Endothelial cell of umbilical vein (primary cell): ENCODE measurements at regions of chr5 and their contacts with region 1.

Region 1: DNA sequence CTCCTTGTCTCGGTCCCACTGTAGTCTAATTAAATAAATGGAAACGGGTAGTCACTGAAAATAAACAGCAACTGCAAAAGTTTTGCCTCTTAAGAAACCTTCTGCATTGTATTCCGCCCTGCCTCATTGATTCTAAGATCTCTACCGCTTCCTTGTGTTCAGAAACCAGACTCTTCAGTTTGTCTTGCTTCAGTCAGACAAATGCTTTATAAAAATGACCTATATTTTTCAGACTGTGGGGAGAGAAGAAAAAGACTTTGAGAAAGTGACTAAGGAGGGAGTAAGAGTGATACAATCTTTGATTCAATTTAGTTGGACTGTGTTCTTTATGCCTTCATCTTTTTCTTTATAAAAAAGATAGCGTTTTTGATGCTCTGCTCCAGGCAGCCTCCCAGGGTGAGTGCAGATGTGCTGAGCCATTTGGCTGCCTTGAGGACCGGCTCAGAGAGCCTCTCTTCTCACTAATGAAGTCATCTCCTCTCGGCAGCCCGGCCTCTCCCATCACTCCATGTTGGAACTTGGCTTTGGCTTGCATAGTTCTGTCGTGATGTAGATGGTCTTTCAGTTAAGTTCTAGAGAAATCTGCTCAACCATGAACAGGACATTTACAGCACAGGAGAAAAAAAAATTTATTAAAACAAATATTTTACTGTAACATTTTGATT is 4.0 kb upstream of the VCAN start:
- DNase-seq: no peak
- H3K4me3 ChIP-seq: no peak overlapping the region
- H3K27ac ChIP-seq: no peak overlapping the region
- H3K4me1 ChIP-seq: peaks cover 9% of the 10 kb centered on the region
- H3K27me3 ChIP-seq: peaks cover 46 to 83% of the 10 kb centered on the region in 2 experiments
- CTCF ChIP-seq: no peak
- POLR2A ChIP-seq: no peak

Region 2: DNA sequence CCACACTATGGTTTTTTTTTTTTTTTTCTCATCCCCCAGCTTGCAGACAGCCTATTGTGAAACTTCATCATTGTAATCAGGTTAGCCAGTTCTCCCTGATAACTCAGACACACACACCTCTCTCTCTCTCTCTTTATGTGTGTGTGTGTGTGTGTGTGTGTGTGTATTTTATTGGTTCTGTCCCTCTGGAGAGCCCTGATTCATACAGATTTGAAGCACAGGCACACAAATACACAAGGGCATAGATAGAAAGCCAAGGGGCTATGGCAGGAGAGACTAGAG is 16.6 kb before region 1 on chr5:
- CTCF ChIA-PET with region 1: interaction called, 4 read pairs
- POLR2A ChIA-PET with region 1: no interaction called
- dilution Hi-C with region 1: no loop called
- intact Hi-C with region 1: loop called (anchors 1 kb)
- DNase-seq: no peak
- H3K4me3 ChIP-seq: no peak overlapping the region
- H3K27ac ChIP-seq: no peak overlapping the region
- H3K4me1 ChIP-seq: peaks cover 8% of the 10 kb centered on the region
- H3K27me3 ChIP-seq: peaks cover 4 to 5% of the 10 kb centered on the region in 2 experiments
- CTCF ChIP-seq: no peak
- POLR2A ChIP-seq: no peak